PC-3 (cell line): ENCODE measurements at regions of chr11 and their contacts with region 1.

Region 1: DNA sequence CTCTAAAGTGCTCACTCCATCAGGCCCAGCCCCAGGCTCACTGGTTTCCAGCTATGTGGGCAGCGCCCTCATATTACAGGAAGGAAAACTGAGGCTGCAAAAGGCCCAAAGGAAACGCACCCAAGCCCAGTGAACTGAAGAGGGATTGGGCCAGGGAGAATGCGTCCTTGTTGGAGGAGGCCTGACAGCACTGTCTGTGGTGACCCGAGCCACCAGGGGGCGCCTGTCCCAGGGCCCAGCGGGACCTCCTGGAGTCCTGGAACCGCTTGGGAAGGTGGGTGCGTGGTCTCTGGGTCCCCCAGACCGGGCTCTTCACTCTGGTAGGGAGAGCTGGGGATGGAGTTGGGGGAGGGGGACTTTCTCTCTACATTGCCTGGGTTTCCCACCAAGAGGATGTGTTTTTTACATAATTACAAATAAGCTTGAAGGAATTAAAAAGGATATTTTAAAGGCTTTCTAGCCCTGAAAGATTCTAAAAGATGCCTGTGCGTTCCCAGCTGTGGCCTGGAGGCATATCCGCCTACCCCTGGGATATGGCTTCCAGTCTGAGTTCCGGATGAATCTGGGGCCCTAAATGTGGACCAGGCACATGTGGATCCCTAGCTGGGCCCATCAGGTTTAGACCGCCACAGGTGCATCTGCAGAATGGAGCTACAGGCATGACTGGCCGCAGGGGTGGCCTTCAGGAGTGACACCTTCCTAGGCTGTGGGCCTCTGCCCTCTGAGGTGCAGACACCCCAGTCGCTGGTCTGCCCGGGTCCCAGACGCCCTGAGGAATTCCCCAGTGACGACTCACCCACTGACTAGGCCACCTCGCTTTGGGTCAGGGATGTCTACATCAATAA is 4.2 kb downstream of the SPI1 start:
- DNase-seq: peak; percentile 74
- ATAC-seq: peak; percentile 95
- H3K4me3 ChIP-seq: no peak overlapping the region
- H3K27ac ChIP-seq: no peak overlapping the region
- H3K4me1 ChIP-seq: peaks cover 9% of the 10 kb centered on the region; the same call in 1 of the 2 replicates
- H3K27me3 ChIP-seq: no peaks in the 10 kb centered on the region
- CTCF ChIP-seq: peak; percentile 91

Region 2: DNA sequence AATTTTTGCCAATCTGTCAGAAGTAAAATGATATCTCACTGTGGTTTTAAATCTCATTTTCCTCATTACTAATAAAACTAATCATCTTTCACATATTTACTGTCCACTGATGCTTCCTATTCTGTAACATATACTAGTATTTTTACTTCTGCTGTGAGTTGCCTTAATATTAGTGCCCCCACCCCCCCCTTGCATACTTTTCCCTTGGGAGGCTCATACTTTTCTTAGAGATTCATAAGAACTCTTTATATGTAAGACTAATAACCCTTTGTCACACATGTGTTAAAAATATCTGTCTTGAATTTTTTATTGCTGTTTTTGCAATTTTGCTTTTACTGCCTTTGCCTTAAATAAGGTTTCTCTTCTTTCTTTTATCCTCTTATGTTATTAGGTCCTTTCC is 1340.1 kb before region 1 on chr11:
- CTCF ChIA-PET with region 1: no interaction called
- POLR2A ChIA-PET with region 1: no interaction called
- intact Hi-C with region 1: no loop called
- DNase-seq: no peak
- ATAC-seq: no peak
- H3K4me3 ChIP-seq: no peak overlapping the region
- H3K27ac ChIP-seq: no peak overlapping the region
- H3K4me1 ChIP-seq: no peaks in the 10 kb centered on the region
- H3K27me3 ChIP-seq: no peaks in the 10 kb centered on the region
- CTCF ChIP-seq: no peak

Region 3: GRCh38 chr11:47317064-47317828 is 56.9 kb before region 1 on chr11:
- CTCF ChIA-PET with region 1: no interaction called
- POLR2A ChIA-PET with region 1: no interaction called
- intact Hi-C with region 1: no loop called
- DNase-seq: no peak
- ATAC-seq: no peak
- H3K4me3 ChIP-seq: no peak overlapping the region
- H3K27ac ChIP-seq: no peak overlapping the region
- H3K4me1 ChIP-seq: no peaks in the 10 kb centered on the region
- H3K27me3 ChIP-seq: no peaks in the 10 kb centered on the region
- CTCF ChIP-seq: no peak

Region 4: GRCh38 chr11:47407746-47408590 is 33.9 kb after region 1 on chr11 and contains the start of gene SLC39A13:
- CTCF ChIA-PET with region 1: interaction called, 5 read pairs
- POLR2A ChIA-PET with region 1: no interaction called
- intact Hi-C with region 1: loop called (anchors 1 kb)
- DNase-seq: peak; percentile 90
- ATAC-seq: peak; percentile 79
- H3K4me3 ChIP-seq: peak within 1 kb of the TSS; percentile 88
- H3K27ac ChIP-seq: peak within 1 kb of the TSS; percentile 85
- H3K4me1 ChIP-seq: peaks cover 24% of the 10 kb centered on the region
- H3K27me3 ChIP-seq: no peaks in the 10 kb centered on the region
- CTCF ChIP-seq: peak; percentile 74
- total RNA-seq, gene SLC39A13: 29.4 and 32.5 TPM in 2 replicates